Activated CD4-positive, alpha-beta T cell treated with anti-CD3 and anti-CD28 coated beads, Interleukin-2, amount 10 ng/mL, durations not matched to agents 24 days and 14 days (primary cell): ENCODE measurements at regions of chr12 and their contacts with region 1.

Region 1: GRCh38 chr12:130871286-130872178 is at the start of gene RAN:
- DNase-seq: peak; percentile 97
- H3K4me3 Mint-ChIP-seq: peak within 1 kb of the TSS; percentile 97
- H3K27ac Mint-ChIP-seq: peak within 1 kb of the TSS; percentile 98
- H3K4me1 Mint-ChIP-seq: peaks cover 35% of the 10 kb centered on the region
- H3K27me3 Mint-ChIP-seq: no peaks in the 10 kb centered on the region
- total RNA-seq, gene RAN: 2,022 and 2,040 TPM in 2 replicates

Region 2: GRCh38 chr12:130761537-130762318 is 109.8 kb before region 1 on chr12:
- intact Hi-C with region 1: loop called (anchors 5 kb)
- DNase-seq: peak; percentile 85
- H3K4me3 Mint-ChIP-seq: peak overlapping the region; percentile 60
- H3K27ac Mint-ChIP-seq: no peak overlapping the region
- H3K4me1 Mint-ChIP-seq: peaks cover 12% of the 10 kb centered on the region
- H3K27me3 Mint-ChIP-seq: peaks cover 4% of the 10 kb centered on the region

Region 3: GRCh38 chr12:130838951-130839769 is 32.4 kb before region 1 on chr12 and contains the start of gene STX2:
- intact Hi-C with region 1: loop called (anchors 1 kb)
- DNase-seq: peak; percentile 98
- H3K4me3 Mint-ChIP-seq: peak within 1 kb of the TSS; percentile 88
- H3K27ac Mint-ChIP-seq: peak within 1 kb of the TSS; percentile 67
- H3K4me1 Mint-ChIP-seq: peaks cover 19% of the 10 kb centered on the region
- H3K27me3 Mint-ChIP-seq: no peaks in the 10 kb centered on the region
- total RNA-seq, gene STX2: 18.2 and 19.2 TPM in 2 replicates

Region 4: DNA sequence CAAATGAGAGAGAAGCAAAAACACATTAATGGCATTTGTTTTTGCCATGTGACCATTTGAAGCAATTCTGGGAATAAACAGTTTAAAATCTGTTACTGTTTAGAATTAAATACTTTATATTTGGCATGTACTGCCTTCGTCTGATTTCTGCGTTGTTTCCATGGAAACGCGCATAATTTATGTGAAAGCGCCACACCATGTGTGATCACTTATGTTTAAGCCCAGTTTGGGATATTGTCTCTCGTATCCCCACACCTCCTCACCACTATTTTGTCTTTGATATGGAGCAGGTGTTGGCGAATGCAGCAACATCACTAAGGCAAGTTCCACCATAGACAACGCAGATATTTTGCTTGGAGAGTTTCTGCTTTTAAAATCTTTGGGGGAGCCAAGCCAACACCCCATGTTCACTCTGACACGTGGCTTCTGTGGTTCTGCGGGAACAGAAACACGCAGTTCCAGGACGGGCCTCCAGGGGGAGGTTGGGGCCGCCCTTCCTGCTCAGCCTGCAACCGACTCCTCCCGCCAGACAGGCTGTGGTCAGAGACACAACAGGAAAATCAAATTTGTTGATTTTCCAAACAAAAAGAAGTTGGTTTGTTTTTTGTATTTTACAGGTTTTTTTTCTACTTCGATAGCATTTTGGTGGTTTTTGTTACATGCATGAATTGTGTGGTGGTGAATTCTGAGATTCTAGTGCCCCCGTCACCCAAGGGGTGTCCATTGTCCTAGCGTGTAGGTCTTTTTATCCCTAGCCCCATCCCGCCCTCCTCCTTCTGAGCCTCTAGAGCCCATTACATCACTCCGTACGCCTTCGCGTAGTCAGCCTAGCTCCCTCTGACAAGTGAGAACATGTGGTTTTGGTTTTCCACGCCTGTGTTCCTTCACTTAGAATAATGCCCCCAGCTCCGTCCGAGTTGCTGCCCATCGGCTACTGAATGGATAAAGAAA is 737.5 kb after region 1 on chr12:
- intact Hi-C with region 1: loop called (anchors 10 kb)
- DNase-seq: peak; percentile 87
- H3K4me3 Mint-ChIP-seq: no peak overlapping the region
- H3K27ac Mint-ChIP-seq: peak overlapping the region; percentile 48
- H3K4me1 Mint-ChIP-seq: peaks cover 46% of the 10 kb centered on the region
- H3K27me3 Mint-ChIP-seq: no peaks in the 10 kb centered on the region

Region 5: DNA sequence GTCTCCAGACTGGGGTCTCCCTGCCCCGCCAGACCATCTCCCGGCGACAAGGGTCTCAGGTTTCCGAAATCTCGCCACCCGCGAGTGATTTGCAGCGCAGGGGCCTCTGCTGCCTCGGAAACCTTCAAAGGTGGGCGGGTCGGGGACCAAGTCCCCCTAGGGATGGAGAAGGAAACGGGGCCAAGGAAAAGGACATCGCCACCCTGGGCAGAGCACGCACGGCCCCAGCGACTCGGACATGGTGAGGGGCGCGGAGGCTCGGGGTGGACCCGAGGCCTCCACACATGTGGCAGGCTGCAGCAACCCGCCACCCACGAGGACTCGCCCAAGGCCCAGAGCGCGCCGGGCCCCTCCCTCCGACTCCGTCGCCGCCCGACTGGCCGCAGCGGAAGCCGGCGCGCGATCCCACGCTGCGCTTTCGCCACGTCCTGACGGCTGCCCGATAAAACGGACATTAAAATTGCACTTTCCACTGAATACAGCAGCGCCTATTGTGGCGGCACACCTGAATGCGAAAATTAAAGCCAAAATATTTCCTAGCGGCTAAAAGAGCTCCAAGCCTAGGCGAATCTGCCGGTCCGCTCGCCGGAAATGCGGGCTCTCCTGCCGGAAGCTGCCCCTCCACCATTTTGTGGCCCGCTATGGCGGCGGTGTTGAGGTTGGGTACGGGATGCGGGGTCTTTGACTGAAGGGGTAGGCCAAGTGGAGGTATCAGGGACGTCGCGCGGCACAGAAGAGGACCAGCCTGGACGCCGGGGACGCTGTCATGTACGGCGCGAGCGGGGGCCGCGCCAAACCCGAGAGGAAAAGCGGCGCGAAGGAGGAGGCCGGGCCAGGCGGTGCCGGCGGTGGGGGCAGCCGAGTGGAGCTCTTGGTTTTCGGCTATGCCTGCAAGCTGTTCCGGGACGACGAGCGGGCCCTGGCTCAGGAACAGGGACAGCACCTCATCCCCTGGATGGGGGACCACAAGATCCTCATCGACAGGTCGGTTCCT is 839.2 kb after region 1 on chr12 and contains the start of gene SFSWAP:
- intact Hi-C with region 1: loop called (anchors 10 kb)
- DNase-seq: peak; percentile 93
- H3K4me3 Mint-ChIP-seq: peak within 1 kb of the TSS; percentile 91
- H3K27ac Mint-ChIP-seq: peak within 1 kb of the TSS; percentile 92
- H3K4me1 Mint-ChIP-seq: peaks cover 23% of the 10 kb centered on the region
- H3K27me3 Mint-ChIP-seq: peaks cover 3% of the 10 kb centered on the region
- total RNA-seq, gene SFSWAP: 69.0 and 74.4 TPM in 2 replicates